Dorsolateral prefrontal cortex (tissue), 120 donors: ENCODE measurements at regions of chr5 and their contacts with region 1.

Region 1: GRCh38 chr5:132272311-132273210 is 15.1 kb downstream of the PDLIM4 start:
- DNase-seq: peak in 1 of 10 donors; percentile 33
- H3K4me3 ChIP-seq: peak overlapping the region in 2 of 59 donors; percentile 3 to 16
- H3K27ac ChIP-seq: peak overlapping the region in 2 of 59 donors; percentile 10 to 38
- H3K27me3 ChIP-seq: no peaks in the 10 kb centered on the region
- CTCF ChIP-seq: peak; percentile 48 to 87 (median 78)

Region 2: DNA sequence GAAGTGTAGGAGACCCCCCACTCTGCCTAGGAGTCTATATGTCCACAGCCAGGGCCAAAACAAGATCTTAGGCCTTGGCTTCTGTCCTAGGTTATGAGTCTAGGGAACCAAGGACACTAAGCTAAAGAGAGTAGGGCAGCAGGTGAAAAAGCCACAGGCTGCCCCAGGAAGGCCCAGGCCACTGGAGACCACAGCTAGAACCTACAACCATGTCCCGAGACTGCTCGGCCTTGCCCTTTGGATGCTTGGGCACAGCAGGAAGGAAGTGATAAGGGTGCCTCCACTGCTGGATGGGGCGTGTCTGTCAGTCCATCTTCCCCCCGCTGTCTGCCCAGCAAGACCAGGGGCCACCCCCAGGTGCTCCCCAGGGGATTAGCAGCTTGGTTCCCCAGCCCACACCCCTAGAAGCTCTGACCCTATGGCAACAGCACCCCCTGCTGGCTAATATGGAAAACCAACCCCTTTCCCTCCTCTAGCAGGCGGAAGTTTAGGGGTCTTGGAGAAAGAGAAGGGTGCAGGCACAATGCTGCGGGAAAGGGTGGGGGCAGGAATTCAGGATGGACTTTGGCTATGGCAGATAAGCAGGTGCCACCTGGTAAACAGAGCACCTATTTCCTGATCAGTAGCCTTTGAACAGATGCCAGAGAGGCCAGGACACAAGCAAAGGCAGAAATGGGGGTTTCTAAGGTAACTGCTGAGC is 228.5 kb after region 1 on chr5:
- intact Hi-C with region 1: loop called in 1 of 2 experiments (anchors 5 kb)
- DNase-seq: peak in 4 of 10 donors; percentile 44 to 77 (median 52)
- H3K4me3 ChIP-seq: no peak overlapping the region
- H3K27ac ChIP-seq: peak overlapping the region in 21 of 59 donors; percentile 17 to 60 (median 48)
- H3K27me3 ChIP-seq: no peaks in the 10 kb centered on the region
- CTCF ChIP-seq: peak; percentile 33 to 95 (median 88)